ENCODE measurements at regions of chr6 and their contacts with region 1.

Region 1: GRCh38 chr6:170529839-170530469 is 23.2 kb downstream of the PSMB1 start:
- DNase-seq: peak; percentile 49 to 79
- ATAC-seq: peak; percentile 81

Region 2: DNA sequence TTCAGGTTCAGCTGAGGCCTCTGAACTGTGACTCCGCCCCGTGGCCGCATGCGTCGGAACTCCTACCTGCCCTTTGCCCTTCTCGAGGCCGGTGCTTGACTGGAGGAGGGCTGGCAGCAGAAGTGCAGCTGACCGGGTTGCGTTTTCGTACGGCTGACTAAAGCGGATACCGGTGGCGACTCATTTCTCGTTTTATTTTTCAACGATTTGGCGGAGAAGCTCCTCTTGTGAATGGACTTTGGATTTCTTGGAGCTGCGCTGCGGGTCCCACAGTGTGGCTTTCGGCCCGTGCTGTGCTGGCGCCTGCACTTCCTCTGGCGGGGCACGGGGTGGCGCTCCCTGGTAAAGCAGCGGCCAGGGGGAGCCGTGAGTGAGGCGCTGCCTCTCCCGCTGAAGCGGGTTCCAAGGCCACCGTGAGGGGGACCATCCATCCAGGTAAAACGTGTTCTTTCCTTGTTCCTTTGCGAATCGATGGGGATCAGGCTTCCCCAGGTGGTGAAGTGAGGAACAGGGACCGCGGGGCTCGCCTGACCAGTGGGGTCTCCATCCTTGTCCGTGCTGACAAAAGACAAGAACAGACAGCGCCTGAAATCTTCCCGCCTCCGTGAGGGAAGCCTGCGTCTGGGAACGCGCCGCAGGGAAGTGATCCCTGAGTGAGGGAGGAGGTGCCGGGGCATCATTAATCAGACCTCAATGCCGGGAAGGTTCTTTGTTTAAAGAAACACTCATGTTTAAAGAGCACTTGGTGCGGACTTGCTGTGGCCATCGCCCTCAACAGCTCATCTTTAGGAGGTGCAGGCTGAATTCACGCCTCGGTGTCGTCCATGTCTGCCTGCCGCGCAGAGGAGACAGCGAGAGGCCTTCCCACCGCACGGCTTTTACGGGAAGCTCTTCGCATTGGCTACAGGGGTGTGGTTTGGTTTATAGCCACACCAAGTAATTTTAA is 739.7 kb before region 1 on chr6:
- intact Hi-C with region 1: loop called in 1 of 2 experiments (anchors 10 kb)
- DNase-seq: peak; percentile 67 to 80
- ATAC-seq: peak; percentile 95

Region 3: DNA sequence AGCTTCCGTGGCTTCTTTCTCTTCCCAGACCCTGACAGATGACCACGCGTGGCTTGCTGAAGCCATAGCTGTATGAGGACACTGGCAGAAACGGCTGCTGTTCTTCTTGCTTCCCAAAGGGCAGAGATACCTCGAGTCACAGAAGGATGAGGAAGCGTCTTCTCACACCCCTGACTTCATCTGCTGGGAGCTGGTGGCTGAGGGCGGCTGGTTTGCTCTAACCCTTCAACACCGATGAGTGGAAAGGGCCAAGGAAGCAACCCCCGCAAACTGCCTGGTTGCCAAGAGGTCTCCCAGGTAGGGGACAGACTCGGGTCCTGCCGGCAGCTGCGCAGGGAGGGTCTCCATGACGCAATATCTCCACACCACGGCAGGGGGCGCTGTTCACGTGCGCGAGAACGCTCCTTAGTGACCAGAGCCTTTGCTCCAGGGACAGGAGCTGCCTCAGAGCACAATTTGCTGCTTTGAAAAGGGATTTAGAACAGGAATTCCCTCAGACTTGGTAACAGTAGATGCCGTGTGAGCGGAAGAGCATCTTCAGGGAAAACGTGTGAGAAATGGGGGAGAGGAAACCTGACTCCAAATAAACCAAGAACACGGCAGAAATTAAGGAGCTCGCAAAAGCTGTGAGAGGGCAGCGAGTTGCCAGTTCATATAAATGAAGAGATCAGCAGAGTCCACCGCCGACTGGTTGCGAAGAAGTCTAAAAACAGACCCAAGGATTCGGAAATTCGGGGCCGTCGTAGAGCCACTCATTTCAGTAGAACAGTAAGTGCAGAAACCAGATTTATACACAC is 698.3 kb before region 1 on chr6:
- intact Hi-C with region 1: loop called in 1 of 2 experiments (anchors 5 kb)
- DNase-seq: peak; percentile 46 to 74
- ATAC-seq: peak; percentile 82

Region 4: DNA sequence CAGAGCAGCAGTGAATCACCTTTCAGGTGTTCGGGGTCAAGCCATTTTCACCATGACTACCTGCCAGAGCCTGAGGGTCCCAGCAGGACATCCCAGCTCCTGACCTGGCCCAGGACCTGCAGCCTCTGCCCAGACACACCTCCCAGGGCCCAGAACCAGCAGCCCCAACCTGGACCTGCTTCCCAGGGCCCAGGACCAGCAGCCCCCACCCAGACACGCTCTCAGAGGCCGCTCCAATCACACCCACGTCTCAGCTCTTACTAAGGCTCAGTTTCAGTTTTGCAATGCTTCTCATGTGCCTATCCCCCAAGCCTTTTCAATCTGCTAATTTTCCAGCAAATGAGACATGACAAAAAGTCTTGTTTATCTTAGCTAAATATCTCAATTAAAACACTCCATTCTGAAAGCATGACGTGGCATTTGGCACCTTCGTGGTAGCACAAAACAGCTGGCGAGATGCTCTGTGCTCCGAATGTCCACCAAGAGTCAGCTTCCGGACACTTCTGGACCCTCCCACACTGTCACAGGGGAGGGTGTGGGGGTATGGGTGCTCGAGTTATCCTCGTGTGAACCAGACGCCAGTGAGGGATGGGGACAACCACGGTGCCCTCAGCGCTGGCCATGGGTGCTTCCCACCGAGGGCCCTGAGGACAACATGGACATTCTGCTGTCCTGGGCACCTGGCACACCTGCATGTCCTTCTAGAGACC is 492.3 kb before region 1 on chr6:
- intact Hi-C with region 1: no loop called
- DNase-seq: peak; percentile 32 to 48
- ATAC-seq: no peak

Region 5: GRCh38 chr6:170584181-170584953 is 54.4 kb after region 1 on chr6 and contains the start of gene PDCD2:
- intact Hi-C with region 1: no loop called
- DNase-seq: peak; percentile 95
- ATAC-seq: peak; percentile 97
- total RNA-seq, gene PDCD2: 42.4 to 48.7 TPM

Measured in left colon (tissue), 2 donors.